ENCODE measurements at regions of chr17 and their contacts with region 1.

Region 1: DNA sequence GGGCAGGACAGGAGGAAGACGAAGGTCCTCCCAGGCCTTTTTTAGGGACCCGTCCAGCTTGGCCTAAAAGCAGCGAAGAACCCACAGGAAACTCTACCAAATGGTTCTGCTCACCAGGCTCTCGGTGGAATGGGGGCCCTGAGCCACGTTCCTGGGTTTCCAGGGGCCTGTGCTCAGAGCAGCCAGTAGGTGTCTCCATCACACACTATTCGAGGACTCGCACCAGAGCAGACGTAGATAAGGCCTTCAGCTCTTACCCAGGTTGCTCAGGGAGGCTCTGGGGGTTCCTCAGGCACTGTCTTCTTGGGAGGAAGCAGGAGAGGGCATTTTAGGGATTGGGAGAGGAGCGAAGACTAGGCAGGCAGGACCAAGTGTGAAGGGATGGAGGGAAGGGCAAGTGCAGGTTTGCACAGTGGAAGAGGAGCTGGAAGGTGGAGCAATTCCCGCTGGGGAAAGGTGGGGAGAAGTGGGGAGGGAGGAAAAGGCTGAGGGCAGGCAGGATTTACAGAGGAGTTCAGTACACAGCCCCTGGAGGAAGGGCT is 157.1 kb downstream of the RGS9 start:
- DNase-seq: no peak
- ATAC-seq: peak; percentile 37
- H3K4me3 Mint-ChIP-seq: no peak overlapping the region
- H3K27ac Mint-ChIP-seq: no peak overlapping the region
- H3K4me1 Mint-ChIP-seq: no peaks in the 10 kb centered on the region
- H3K27me3 Mint-ChIP-seq: peaks cover 14% of the 10 kb centered on the region
- CTCF ChIP-seq: no peak

Region 2: DNA sequence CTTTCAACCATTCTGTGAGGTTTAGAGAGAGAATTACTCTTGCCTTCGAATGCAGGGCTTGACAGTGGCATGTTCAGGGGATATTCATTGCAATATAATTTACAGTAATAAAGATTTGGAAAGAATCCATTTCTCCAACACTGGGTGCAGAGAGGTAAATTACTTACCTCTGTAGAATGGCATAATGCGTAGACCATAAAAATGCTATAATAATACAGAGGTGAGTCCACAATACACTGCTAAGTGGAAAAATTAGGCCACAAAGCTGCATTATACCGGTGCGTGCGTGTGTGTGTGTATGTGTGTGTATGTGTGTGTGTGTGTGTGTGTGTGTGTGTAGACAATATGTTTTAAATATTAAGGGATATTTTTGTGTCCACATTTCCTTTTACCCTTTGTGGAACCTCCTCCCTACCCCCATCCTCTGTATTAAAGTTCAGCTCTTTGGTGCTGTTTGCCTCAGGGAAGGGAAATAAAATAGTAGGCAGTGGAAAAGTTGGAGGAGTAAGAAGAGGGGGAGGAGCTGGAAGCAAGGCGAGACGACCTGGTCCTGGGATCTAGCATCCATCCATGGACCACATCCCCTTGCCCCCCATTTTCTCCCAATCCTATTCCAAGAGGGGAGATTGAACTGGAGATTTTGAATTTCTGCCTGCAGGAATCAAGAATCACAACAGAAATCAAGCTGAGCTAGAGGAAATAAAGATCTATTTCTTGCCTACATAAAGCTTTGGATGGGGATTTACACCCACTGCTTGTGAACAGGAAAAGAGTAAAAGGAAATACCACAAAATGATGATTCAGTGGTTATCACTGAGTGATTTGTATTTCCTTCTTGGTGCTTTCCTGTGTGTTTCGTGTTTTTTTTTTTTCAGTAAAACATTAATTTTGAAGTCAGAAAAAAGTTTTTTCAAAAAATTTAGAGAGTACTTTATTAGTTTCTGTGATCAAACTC is 32.3 kb before region 1 on chr17:
- CTCF ChIA-PET with region 1: no interaction called
- POLR2A ChIA-PET with region 1: no interaction called
- intact Hi-C with region 1: no loop called
- DNase-seq: no peak
- ATAC-seq: no peak
- H3K4me3 Mint-ChIP-seq: no peak overlapping the region
- H3K27ac Mint-ChIP-seq: no peak overlapping the region
- H3K4me1 Mint-ChIP-seq: no peaks in the 10 kb centered on the region
- H3K27me3 Mint-ChIP-seq: peaks cover 30% of the 10 kb centered on the region
- CTCF ChIP-seq: no peak

Region 3: GRCh38 chr17:66165513-66166123 is 871.4 kb after region 1 on chr17:
- CTCF ChIA-PET with region 1: interaction called, 44 read pairs
- POLR2A ChIA-PET with region 1: interaction called, 3 read pairs
- intact Hi-C with region 1: no loop called
- DNase-seq: no peak
- ATAC-seq: no peak
- H3K4me3 Mint-ChIP-seq: no peak overlapping the region
- H3K27ac Mint-ChIP-seq: no peak overlapping the region
- H3K4me1 Mint-ChIP-seq: no peaks in the 10 kb centered on the region
- H3K27me3 Mint-ChIP-seq: no peaks in the 10 kb centered on the region
- CTCF ChIP-seq: peak; percentile 84

Region 4: DNA sequence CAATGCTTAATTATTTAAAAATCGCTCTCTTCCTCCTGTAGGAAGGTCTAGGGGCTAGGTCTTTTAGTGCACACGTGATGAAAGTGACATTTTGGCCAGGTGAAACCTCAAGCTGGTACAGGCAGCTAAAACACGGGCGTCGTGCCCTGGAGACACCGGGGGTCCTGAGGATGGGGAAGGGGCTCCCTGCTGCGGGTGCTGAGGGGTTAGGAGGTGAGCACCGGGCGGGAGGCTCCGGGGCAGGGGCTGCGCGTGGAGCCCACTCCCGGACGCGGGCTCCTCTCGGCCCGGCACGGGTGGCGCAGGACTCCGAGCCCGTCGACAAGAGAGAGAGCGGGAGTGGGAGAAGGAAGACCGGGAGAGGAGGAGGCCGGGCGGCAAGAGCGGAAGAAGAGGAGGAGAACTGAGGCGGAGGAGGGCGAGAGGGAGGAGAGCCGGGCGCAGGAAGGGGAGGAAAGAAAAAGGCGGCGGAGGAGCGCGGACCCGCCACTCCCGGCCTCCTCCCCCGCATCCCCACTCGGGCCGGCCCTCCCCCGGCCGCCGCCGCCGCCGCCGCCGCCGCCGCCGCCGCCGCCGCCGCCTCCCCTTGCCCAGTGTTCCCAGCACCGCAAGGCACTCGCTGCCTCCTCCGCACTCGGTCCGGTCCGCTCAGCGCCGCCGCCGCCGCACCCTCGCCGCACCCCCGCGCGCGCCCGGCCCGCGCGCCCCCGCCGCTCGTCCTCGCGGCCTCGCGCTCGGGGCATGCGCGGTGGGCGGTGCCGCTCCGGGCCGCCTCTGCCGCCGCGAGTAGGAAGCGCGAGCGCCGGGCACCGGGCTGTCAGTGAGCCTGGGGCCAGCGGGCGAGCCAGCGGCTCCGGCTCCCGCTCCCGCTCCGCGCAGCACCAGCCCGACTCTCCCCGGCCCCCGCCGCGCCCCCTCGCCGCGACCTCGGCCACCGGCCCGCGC is 1007.8 kb after region 1 on chr17 and contains the start of gene PRKCA:
- CTCF ChIA-PET with region 1: no interaction called
- POLR2A ChIA-PET with region 1: no interaction called
- intact Hi-C with region 1: no loop called
- DNase-seq: peak; percentile 68
- ATAC-seq: peak; percentile 85
- H3K4me3 Mint-ChIP-seq: peak within 1 kb of the TSS; percentile 90
- H3K27ac Mint-ChIP-seq: peak within 1 kb of the TSS; percentile 42
- H3K4me1 Mint-ChIP-seq: peaks cover 11% of the 10 kb centered on the region
- H3K27me3 Mint-ChIP-seq: peaks cover 24% of the 10 kb centered on the region
- CTCF ChIP-seq: no peak
- total RNA-seq, gene PRKCA: 1.4 and 2.2 TPM in 2 replicates

Measured in activated B cell treated with CpG ODN at 0.5 μM for 24 hours (primary cell).